CD4-positive, alpha-beta memory T cell (primary cell): ENCODE measurements at regions of chr5 and their contacts with region 1.

Region 1: DNA sequence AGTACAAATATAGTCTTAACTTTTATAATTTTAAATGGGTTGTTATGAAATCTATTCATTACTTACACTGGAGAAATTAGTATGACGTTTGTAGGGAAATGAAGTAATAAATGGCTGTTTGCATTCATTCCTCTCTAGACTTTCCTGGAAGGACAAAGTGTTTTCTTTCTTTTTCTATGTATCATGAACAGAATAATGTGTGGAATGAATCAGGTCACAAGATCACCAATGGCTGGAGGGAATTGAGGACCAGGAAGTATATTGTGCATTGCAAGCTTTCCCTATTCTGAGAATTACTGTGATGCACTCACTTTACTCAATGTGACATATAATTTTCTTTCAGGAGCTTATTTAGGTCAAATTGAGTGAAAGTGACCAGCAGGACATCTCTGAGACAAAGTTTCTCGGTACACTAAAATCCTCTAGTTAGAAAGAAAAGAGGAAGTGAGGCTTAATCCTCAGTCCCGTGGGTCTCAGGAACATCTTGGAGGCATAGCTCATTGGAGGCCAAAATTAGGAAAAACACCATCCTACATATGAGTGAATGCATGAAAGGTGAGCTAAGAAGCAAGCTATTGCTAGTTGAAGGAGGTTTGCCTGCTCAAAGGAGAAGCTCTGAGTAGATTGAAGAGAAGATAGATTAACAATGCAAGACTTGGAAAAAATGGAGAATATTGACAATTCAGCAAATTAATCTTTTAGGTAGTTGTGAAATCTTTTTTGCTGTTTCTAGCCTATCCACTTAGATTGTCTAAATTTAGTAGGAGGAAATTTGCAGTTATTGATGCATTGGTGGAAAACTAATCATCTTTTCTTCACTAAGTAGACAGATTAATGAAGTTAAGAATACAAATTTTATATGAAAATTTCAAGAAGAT is 28.0 kb downstream of the ERAP2 start:
- DNase-seq: no peak
- H3K4me3 ChIP-seq: no peak overlapping the region
- H3K4me3 Mint-ChIP-seq: no peak overlapping the region
- H3K27ac ChIP-seq: no peak overlapping the region
- H3K27ac Mint-ChIP-seq: peak overlapping the region; percentile 27 to 83 (median 57)
- H3K4me1 ChIP-seq: no peaks in the 10 kb centered on the region
- H3K4me1 Mint-ChIP-seq: peaks cover 0 to 13% (median 6%) of the 10 kb centered on the region in 4 donors
- H3K27me3 ChIP-seq: no peaks in the 10 kb centered on the region
- H3K27me3 Mint-ChIP-seq: no peaks in the 10 kb centered on the region

Region 2: DNA sequence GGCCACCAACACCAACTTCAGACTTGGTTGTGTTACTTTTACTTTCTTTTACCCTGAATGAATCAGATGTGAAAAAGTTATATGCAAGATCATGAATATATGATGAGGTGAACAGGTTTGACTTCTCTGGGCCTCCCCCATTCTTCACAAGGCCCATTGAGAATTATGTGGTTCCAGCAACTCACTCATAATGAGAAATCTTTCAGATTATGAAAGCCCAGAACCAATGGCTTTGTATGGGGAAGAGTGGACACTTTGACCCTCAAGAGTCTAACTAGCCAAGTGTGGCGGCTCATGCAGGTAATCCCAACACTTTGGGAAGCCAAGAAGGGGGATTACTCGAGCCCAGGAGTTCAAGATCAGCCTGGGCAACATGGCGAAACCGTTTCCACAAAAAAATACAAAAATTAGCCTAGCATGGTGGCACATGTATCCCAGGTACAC is 15.5 kb after region 1 on chr5:
- CTCF ChIA-PET with region 1: interaction called, 3 read pairs
- POLR2A ChIA-PET with region 1: no interaction called
- intact Hi-C with region 1: loop called (anchors 2 kb)
- DNase-seq: no peak
- H3K4me3 ChIP-seq: no peak overlapping the region
- H3K4me3 Mint-ChIP-seq: no peak overlapping the region
- H3K27ac ChIP-seq: no peak overlapping the region
- H3K27ac Mint-ChIP-seq: peak overlapping the region in 1 of 7 donors; percentile 83
- H3K4me1 ChIP-seq: peaks cover 9% of the 10 kb centered on the region
- H3K4me1 Mint-ChIP-seq: peaks cover 8 to 22% (median 10%) of the 10 kb centered on the region in 4 donors
- H3K27me3 ChIP-seq: no peaks in the 10 kb centered on the region
- H3K27me3 Mint-ChIP-seq: no peaks in the 10 kb centered on the region

Region 3: DNA sequence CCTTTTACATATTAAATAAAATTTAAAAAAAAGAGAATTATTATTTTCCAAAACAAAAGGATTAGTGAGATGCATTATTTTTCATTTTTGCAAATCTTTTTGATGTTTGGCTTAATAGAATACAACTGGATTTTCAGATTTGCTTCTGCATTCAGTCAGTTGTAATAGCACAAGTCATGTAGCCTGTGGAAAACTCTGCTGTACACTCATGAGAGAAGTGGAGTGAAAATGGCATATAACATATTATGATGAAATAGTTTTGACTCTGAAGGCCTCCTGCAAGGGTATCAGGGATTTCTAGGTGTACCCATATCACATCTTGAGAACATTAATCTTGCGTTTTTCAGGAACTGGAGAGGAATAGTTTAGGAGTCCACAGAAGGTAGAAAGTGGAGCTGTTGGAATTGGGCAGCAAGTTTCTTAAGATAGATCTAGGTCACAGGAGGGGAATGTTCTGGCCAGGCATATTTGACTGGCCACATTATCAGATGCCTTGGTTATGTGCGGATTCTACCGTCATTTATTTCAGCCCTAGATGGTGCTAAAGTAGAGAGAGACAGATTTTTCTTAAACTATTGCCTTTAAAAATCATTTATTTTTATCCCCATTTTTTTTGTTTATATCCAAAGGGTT is 47.9 kb after region 1 on chr5:
- CTCF ChIA-PET with region 1: no interaction called
- POLR2A ChIA-PET with region 1: no interaction called
- intact Hi-C with region 1: no loop called
- DNase-seq: no peak
- H3K4me3 ChIP-seq: no peak overlapping the region
- H3K4me3 Mint-ChIP-seq: peak overlapping the region in 3 of 8 donors; percentile 3 to 67 (median 48)
- H3K27ac ChIP-seq: no peak overlapping the region
- H3K27ac Mint-ChIP-seq: peak overlapping the region; percentile 12 to 88 (median 51)
- H3K4me1 ChIP-seq: peaks cover 63% of the 10 kb centered on the region
- H3K4me1 Mint-ChIP-seq: peaks cover 56 to 84% (median 68%) of the 10 kb centered on the region in 4 donors
- H3K27me3 ChIP-seq: no peaks in the 10 kb centered on the region
- H3K27me3 Mint-ChIP-seq: no peaks in the 10 kb centered on the region

Region 4: DNA sequence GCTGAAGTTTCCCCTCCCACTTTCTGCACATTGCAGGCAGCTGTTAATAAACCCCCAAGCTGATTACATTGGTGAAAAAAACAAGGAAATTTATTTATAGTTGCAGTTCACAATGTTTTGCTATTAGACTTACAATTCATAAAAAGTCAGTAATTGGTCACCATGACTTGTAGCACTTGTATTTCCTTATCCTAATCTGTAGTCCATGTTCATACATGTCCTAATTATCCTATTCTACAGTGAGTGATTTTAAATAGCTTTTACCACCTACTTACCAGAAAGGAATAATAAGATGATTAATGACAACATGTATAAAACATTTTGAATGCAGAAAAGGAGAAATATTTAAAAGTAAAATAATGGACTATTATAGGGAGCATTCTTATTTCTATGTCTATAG is 1038.7 kb after region 1 on chr5:
- CTCF ChIA-PET with region 1: no interaction called
- POLR2A ChIA-PET with region 1: no interaction called
- intact Hi-C with region 1: no loop called
- DNase-seq: no peak
- H3K4me3 ChIP-seq: no peak overlapping the region
- H3K4me3 Mint-ChIP-seq: no peak overlapping the region
- H3K27ac ChIP-seq: no peak overlapping the region
- H3K27ac Mint-ChIP-seq: no peak overlapping the region
- H3K4me1 ChIP-seq: no peaks in the 10 kb centered on the region
- H3K4me1 Mint-ChIP-seq: no peaks in the 10 kb centered on the region
- H3K27me3 ChIP-seq: no peaks in the 10 kb centered on the region
- H3K27me3 Mint-ChIP-seq: no peaks in the 10 kb centered on the region